Adrenal gland (tissue), 19 donors: ENCODE measurements at regions of chr2 and their contacts with region 1.

Region 1: GRCh38 chr2:167544602-167545001 is 656.3 kb downstream of the XIRP2 start:
- DNase-seq: no peak
- H3K4me3 ChIP-seq: no peak overlapping the region
- H3K27ac ChIP-seq: no peak overlapping the region
- H3K4me1 ChIP-seq: no peaks in the 10 kb centered on the region
- H3K27me3 ChIP-seq: no peaks in the 10 kb centered on the region
- CTCF ChIP-seq: no peak
- POLR2A ChIP-seq: no peak

Region 2: GRCh38 chr2:167331636-167332232 is 212.9 kb before region 1 on chr2:
- intact Hi-C with region 1: loop called in 1 of 2 experiments (anchors 5 kb)
- DNase-seq: no peak
- H3K4me3 ChIP-seq: no peak overlapping the region
- H3K27ac ChIP-seq: no peak overlapping the region
- H3K4me1 ChIP-seq: no peaks in the 10 kb centered on the region
- H3K27me3 ChIP-seq: no peaks in the 10 kb centered on the region
- CTCF ChIP-seq: no peak
- POLR2A ChIP-seq: no peak

Region 3: GRCh38 chr2:167908786-167909185 is 364.2 kb after region 1 on chr2:
- intact Hi-C with region 1: no loop called
- DNase-seq: no peak
- H3K4me3 ChIP-seq: no peak overlapping the region
- H3K27ac ChIP-seq: no peak overlapping the region
- H3K4me1 ChIP-seq: no peaks in the 10 kb centered on the region
- H3K27me3 ChIP-seq: no peaks in the 10 kb centered on the region
- CTCF ChIP-seq: no peak
- POLR2A ChIP-seq: no peak